Prostate gland (tissue), 2 donors: ENCODE measurements at regions of chr17 and their contacts with region 1.

Region 1: GRCh38 chr17:40531051-40531991 is 29.9 kb upstream of the TNS4 start:
- DNase-seq: no peak
- H3K4me3 ChIP-seq: no peak overlapping the region
- H3K27ac ChIP-seq: no peak overlapping the region
- H3K4me1 ChIP-seq: peaks cover 7% of the 10 kb centered on the region
- H3K27me3 ChIP-seq: no peaks in the 10 kb centered on the region
- CTCF ChIP-seq: no peak
- POLR2A ChIP-seq: no peak

Region 2: GRCh38 chr17:40362696-40363110 is 168.6 kb before region 1 on chr17:
- intact Hi-C with region 1: loop called (anchors 5 kb)
- DNase-seq: no peak
- H3K4me3 ChIP-seq: peak overlapping the region; percentile 38 to 42
- H3K27ac ChIP-seq: no peak overlapping the region
- H3K4me1 ChIP-seq: no peaks in the 10 kb centered on the region
- H3K27me3 ChIP-seq: no peaks in the 10 kb centered on the region
- CTCF ChIP-seq: peak in 2 of 4 experiments; percentile 52 to 80
- POLR2A ChIP-seq: no peak

Region 3: DNA sequence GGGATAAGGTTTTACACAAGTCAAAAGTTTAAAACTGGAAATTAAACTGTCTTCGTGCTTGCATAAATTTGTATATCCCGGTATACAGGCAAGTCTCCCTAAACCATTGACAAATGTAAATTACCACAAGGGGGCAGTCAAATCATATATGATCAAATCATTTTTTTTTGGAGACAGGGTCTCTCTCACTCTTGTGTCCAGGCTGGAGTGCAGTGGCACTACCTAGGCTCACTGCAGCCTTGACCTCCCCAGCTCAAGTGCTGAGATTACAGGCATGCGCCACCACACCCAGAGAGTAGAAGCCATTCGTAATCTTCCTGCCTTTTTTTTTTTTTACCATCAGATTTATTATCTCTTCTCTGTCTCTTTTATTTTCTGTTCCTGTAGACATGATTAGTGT is 132.1 kb before region 1 on chr17:
- intact Hi-C with region 1: loop called (anchors 2 kb)
- DNase-seq: no peak
- H3K4me3 ChIP-seq: no peak overlapping the region
- H3K27ac ChIP-seq: no peak overlapping the region
- H3K4me1 ChIP-seq: no peaks in the 10 kb centered on the region
- H3K27me3 ChIP-seq: no peaks in the 10 kb centered on the region
- CTCF ChIP-seq: peak in 3 of 4 experiments; percentile 55 to 69 (median 64)
- POLR2A ChIP-seq: no peak

Region 4: GRCh38 chr17:40443583-40444327 is 87.6 kb before region 1 on chr17:
- intact Hi-C with region 1: loop called (anchors 5 kb)
- DNase-seq: peak; percentile 66
- H3K4me3 ChIP-seq: peak overlapping the region; percentile 49 to 52
- H3K27ac ChIP-seq: peak overlapping the region; percentile 84 to 93
- H3K4me1 ChIP-seq: peaks cover 3% of the 10 kb centered on the region
- H3K27me3 ChIP-seq: no peaks in the 10 kb centered on the region
- CTCF ChIP-seq: peak in 3 of 4 experiments; percentile 7 to 41 (median 18)
- POLR2A ChIP-seq: peak; percentile 7

Region 5: GRCh38 chr17:40480501-40481003 is 50.8 kb before region 1 on chr17:
- intact Hi-C with region 1: loop called (anchors 5 kb)
- DNase-seq: no peak
- H3K4me3 ChIP-seq: no peak overlapping the region
- H3K27ac ChIP-seq: no peak overlapping the region
- H3K4me1 ChIP-seq: no peaks in the 10 kb centered on the region
- H3K27me3 ChIP-seq: no peaks in the 10 kb centered on the region
- CTCF ChIP-seq: no peak
- POLR2A ChIP-seq: no peak

Region 6: GRCh38 chr17:41801374-41802271 is 1270.3 kb after region 1 on chr17:
- intact Hi-C with region 1: no loop called
- DNase-seq: peak; percentile 83
- H3K4me3 ChIP-seq: no peak overlapping the region
- H3K27ac ChIP-seq: peak overlapping the region; percentile 55 to 60
- H3K4me1 ChIP-seq: peaks cover 4% of the 10 kb centered on the region
- H3K27me3 ChIP-seq: no peaks in the 10 kb centered on the region
- CTCF ChIP-seq: peak; percentile 97 to 100 (median 99)
- POLR2A ChIP-seq: no peak